PC-9 (cell line): ENCODE measurements at regions of chr11 and their contacts with region 1.

Region 1: GRCh38 chr11:100821198-100821597 is 134.1 kb downstream of the ARHGAP42 start:
- DNase-seq: no peak
- H3K4me3 ChIP-seq: no peak overlapping the region
- H3K27ac ChIP-seq: no peak overlapping the region
- H3K4me1 ChIP-seq: peaks cover 10% of the 10 kb centered on the region
- H3K27me3 ChIP-seq: no peaks in the 10 kb centered on the region
- CTCF ChIP-seq: no peak

Region 2: DNA sequence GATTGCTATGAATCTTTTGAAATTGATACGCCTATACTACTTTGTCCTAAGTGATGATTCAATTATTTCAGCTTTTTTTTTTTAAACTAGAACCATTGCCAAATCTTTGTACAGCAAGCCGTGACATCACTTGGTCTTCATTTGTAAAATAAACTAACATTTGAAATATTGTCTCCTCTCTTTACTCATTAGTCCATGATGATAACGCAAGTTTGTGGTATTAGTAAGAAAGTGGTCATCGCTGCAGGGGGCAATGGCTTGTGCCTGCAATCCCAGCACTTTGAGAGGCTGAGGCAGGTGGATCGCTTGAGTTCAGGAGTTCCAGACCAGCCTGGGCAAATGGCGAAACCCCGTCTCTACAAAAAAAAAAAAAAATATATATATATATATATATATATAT is 147.0 kb before region 1 on chr11:
- CTCF ChIA-PET with region 1: interaction called, 11 read pairs
- POLR2A ChIA-PET with region 1: no interaction called
- intact Hi-C with region 1: no loop called
- DNase-seq: no peak
- H3K4me3 ChIP-seq: no peak overlapping the region
- H3K27ac ChIP-seq: no peak overlapping the region
- H3K4me1 ChIP-seq: peaks cover 10% of the 10 kb centered on the region
- H3K27me3 ChIP-seq: no peaks in the 10 kb centered on the region
- CTCF ChIP-seq: no peak

Region 3: DNA sequence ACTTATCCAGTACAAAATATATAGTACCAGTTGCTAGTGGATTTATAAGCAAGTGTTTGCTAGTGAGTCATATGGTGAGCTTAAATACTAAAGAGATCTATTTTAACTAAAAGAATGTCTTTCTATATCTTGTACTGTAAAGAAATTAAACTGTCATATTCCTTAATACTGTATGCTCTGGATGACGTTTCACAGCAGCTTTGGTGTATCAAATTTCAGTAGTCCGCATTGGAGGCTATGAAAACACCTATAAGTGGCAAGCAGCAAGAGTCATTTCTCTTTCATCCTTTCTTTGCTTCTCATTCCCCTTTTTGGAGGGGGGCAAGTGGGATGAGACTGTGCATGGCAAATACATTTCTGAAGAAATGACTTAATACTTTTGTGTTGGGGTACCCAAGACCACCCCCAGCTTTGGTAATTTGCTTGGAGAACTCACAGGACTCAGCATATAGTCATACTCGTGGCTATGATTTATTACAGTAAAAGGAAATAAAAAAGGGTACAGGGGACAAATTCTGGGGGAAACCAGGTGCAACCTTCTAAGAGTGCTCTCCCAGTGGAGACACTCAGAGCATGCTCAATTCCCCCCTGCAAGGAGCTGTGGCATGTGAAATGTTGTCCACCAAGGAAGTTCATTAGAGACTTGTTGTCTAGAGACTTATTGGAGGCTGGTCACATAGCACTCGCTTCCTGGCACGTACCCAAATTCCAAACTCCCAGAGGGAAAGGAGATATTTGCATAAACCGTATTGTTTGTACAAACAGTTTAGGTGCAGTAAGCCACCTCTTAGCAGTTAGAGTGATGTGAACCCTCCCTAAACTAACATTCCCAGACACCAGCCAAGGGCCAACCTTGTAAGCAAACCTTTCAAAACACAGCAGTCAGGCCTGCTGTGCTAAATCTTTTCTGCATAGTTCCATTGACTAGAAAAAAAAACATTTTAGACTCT is 97.6 kb after region 1 on chr11:
- CTCF ChIA-PET with region 1: no interaction called
- POLR2A ChIA-PET with region 1: no interaction called
- intact Hi-C with region 1: no loop called
- DNase-seq: peak; percentile 61 to 66
- H3K4me3 ChIP-seq: no peak overlapping the region
- H3K27ac ChIP-seq: no peak overlapping the region
- H3K4me1 ChIP-seq: peaks cover 10% of the 10 kb centered on the region; the same call in 1 of the 2 replicates
- H3K27me3 ChIP-seq: no peaks in the 10 kb centered on the region
- CTCF ChIP-seq: no peak